ENCODE measurements at regions of chr7 and their contacts with region 1.

Region 1: DNA sequence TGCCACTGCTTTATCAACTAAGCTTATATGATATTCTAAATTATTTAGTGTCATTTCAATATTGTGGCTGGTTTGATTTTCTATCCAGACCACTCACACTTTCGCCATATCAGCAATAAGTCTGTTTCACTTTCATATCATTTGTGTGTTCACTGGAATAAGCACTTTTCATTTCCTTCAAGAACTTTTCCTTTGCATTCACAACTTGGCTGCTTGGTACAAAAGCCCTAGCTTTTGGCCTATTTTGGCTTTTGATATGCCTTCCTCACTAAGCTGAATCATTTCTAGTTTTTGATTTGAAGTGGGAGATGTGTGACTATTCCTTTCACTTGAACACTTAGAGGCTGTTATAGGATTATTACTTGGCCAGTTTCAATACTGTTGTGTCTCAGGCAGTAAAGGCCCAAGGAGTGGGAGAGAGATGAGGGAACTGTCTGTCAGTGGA is 120.9 kb upstream of the NAMPT start:
- DNase-seq: no peak
- ATAC-seq: no peak
- H3K4me3 ChIP-seq: no peak overlapping the region
- H3K27ac ChIP-seq: no peak overlapping the region
- H3K4me1 ChIP-seq: no peaks in the 10 kb centered on the region
- H3K27me3 ChIP-seq: no peaks in the 10 kb centered on the region
- CTCF ChIP-seq: no peak

Region 2: GRCh38 chr7:105934572-105935185 is 471.0 kb before region 1 on chr7:
- intact Hi-C with region 1: no loop called
- DNase-seq: no peak
- ATAC-seq: peak in 3 of 4 donors; percentile 27 to 69 (median 60)
- H3K4me3 ChIP-seq: no peak overlapping the region
- H3K27ac ChIP-seq: no peak overlapping the region
- H3K4me1 ChIP-seq: no peaks in the 10 kb centered on the region
- H3K27me3 ChIP-seq: no peaks in the 10 kb centered on the region
- CTCF ChIP-seq: no peak

Region 3: DNA sequence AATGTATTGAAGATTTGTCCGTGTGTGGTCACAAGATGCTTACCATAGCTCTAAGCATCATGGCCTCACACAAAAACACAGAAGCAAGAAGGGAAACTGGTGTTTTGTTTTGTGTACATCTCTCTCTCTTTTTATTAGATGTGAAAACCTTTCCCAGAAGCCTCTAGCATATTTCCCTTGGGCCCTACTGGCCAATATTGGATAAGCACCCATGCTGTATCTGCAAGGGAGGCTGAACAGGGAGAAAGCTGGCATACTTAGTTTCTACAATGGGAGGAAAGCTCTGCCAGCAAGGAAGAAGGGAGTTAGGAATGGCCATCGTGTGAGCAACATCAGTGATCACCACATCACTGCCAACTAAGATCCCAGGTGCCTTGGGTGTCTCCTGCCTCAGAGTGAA is 111.4 kb before region 1 on chr7:
- intact Hi-C with region 1: no loop called
- DNase-seq: no peak
- ATAC-seq: no peak
- H3K4me3 ChIP-seq: no peak overlapping the region
- H3K27ac ChIP-seq: no peak overlapping the region
- H3K4me1 ChIP-seq: no peaks in the 10 kb centered on the region
- H3K27me3 ChIP-seq: peaks cover 0 to 7% (median 0%) of the 10 kb centered on the region in 3 donors
- CTCF ChIP-seq: no peak

Region 4: GRCh38 chr7:106425017-106425719 is 19.4 kb after region 1 on chr7:
- intact Hi-C with region 1: loop called in 1 of 2 experiments (anchors 1 kb)
- DNase-seq: peak; percentile 49 to 71
- ATAC-seq: peak; percentile 82 to 92 (median 84)
- H3K4me3 ChIP-seq: peak overlapping the region; percentile 43
- H3K27ac ChIP-seq: peak overlapping the region; percentile 89
- H3K4me1 ChIP-seq: peaks cover 41% of the 10 kb centered on the region
- H3K27me3 ChIP-seq: no peaks in the 10 kb centered on the region
- CTCF ChIP-seq: no peak

Region 5: GRCh38 chr7:106448992-106449859 is 43.5 kb after region 1 on chr7:
- intact Hi-C with region 1: no loop called
- DNase-seq: no peak
- ATAC-seq: no peak
- H3K4me3 ChIP-seq: no peak overlapping the region
- H3K27ac ChIP-seq: no peak overlapping the region
- H3K4me1 ChIP-seq: no peaks in the 10 kb centered on the region
- H3K27me3 ChIP-seq: peaks cover 0 to 4% (median 0%) of the 10 kb centered on the region in 3 donors
- CTCF ChIP-seq: no peak

Region 6: DNA sequence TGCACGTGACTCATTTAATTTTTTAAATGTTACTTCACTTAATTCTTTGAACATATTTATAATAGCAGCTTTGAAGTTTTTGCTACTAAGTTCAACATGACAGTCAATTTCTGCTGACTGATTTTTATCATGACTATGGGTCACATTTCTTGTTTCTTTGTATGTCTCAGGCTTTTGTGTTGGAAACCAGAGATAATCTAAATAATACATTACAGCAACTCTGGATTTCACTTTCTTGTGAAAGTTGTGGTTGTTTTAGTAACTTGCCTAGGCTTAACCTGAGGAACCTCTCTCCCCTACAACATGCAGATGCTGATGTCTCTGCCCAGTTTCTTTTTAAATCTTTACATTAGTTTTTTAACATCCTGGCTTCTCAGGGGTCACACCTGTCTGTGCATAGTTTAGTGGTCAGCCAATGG is 74.5 kb after region 1 on chr7:
- intact Hi-C with region 1: no loop called
- DNase-seq: no peak
- ATAC-seq: no peak
- H3K4me3 ChIP-seq: no peak overlapping the region
- H3K27ac ChIP-seq: no peak overlapping the region
- H3K4me1 ChIP-seq: peaks cover 16% of the 10 kb centered on the region
- H3K27me3 ChIP-seq: no peaks in the 10 kb centered on the region
- CTCF ChIP-seq: no peak

Measured in psoas muscle (tissue), 8 donors.